ENCODE measurements at regions of chr20 and their contacts with region 1.

Region 1: DNA sequence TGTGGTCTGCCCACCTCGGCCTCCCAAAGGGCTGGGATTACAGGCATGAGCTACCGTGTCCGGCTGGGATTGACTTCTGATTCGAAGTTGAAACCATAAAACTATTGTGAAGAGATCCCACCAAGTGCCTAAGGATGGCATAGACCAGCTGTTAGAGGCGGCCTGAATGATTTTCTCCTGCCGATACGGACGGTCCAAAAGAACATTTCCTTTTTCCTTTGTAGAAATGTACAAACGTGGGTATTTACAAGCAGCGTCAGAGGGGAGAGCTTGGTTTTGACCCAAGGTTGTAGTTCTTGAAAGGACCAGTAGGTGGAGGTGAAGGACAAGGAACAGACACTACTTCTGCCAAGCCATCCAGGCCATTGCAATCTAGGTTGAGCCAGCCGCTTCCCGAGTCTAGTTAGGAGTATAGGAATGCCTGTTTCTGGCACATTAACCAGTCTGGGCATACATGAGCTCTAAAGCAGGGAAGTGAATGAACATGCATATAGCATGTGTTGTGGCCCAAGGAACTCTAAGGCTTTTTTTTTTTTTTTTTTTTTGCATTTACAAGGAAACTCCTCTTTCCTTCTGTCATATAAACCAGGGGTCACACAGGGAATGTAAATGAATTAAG is 29.1 kb downstream of the MOCS3 start:
- DNase-seq: peak; percentile 76 to 92
- ATAC-seq: peak; percentile 96
- H3K4me3 ChIP-seq: no peak overlapping the region
- H3K27ac ChIP-seq: peak overlapping the region; percentile 38 to 75; a peak in 3 of 6 replicates
- H3K4me1 ChIP-seq: peaks cover 4% of the 10 kb centered on the region; the same call in 2 of the 3 replicates
- CTCF ChIP-seq: peak; percentile 92
- EP300 ChIP-seq: no peak
- POLR2A ChIP-seq: no peak
- RAD21 ChIP-seq: peak; percentile 96 to 98

Region 2: DNA sequence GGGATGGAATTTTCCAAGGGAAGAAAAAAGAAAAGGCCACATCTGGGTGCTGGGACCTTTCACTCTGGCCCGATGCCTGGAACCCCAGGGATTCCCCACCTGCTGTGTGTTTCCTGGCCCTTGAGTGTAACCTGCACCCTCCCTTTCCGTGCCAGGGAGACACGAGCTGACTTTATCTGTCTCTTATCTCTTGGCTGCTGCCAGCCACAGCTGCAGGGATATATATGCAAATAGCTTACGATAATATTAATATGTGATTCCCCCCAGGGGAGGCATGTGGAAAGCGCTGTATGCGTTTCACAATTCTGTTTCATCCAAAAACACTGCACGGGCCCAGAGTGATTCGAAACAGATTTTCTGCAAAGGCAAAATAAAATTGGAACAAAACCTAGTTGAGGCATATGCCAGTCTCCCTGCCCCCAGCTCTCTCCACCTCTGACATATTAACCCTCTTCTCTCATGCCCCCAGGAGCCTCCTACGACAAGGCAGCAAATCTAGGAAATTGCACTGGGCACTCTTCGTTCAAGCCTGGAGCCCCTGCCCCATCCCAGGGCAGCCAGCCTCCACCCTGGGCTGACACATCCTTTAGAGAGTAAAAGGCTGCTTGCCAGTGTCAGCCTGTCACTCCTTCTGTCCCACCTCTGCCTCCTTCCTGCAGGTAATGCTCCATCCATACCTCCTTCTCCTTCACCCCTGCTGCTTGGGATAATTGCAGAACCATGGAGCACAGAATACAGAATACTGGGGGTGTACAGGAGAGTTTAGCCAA is 297.7 kb before region 1 on chr20:
- CTCF ChIA-PET with region 1: no interaction called
- POLR2A ChIA-PET with region 1: no interaction called
- DNase-seq: no peak
- ATAC-seq: peak; percentile 40 to 55; a peak in 4 of 6 replicates
- H3K4me3 ChIP-seq: no peak overlapping the region
- H3K27ac ChIP-seq: peak overlapping the region; percentile 27 to 79; a peak in 4 of 6 replicates
- H3K4me1 ChIP-seq: peaks cover 25% of the 10 kb centered on the region
- CTCF ChIP-seq: no peak
- EP300 ChIP-seq: 0 out of 5 replicates have a peak, but pooled peaks of 1 of the 2 experiments have one; percentile 38
- POLR2A ChIP-seq: no peak
- RAD21 ChIP-seq: no peak

Region 3: DNA sequence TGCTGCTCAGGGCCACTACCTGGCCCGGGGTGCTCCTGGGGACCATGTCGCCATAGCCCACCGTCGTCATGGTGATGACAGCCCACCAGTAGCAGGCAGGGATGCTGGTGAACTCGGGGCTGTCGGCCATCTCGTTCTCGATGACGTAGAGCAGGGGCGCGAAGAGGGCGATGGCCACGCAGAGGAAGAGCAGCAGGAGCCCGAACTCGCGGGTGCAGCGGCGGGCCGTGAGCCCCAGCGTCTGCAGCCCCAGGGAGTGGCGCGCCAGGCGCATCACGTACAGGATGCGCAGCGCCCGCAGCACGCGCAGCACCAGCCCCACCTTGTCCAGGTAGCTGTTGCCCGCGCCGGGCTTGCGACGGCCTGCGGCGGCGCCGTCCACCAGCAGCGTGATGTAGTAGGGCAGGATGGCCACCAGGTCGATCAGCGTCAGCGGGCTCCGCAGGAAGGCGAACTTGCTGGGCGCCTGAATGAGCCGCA is 16.6 kb after region 1 on chr20:
- CTCF ChIA-PET with region 1: interaction called, 46 read pairs
- POLR2A ChIA-PET with region 1: no interaction called
- DNase-seq: no peak
- ATAC-seq: no peak
- H3K4me3 ChIP-seq: no peak overlapping the region
- H3K27ac ChIP-seq: no peak overlapping the region
- H3K4me1 ChIP-seq: no peaks in the 10 kb centered on the region
- CTCF ChIP-seq: no peak
- EP300 ChIP-seq: no peak
- POLR2A ChIP-seq: no peak
- RAD21 ChIP-seq: no peak

Region 4: GRCh38 chr20:51311606-51312495 is 324.1 kb after region 1 on chr20:
- CTCF ChIA-PET with region 1: interaction called, 565 read pairs
- POLR2A ChIA-PET with region 1: interaction called, 5 read pairs
- DNase-seq: no peak
- ATAC-seq: no peak
- H3K4me3 ChIP-seq: no peak overlapping the region
- H3K27ac ChIP-seq: no peak overlapping the region
- H3K4me1 ChIP-seq: 0 out of 3 replicates have a peak, but pooled peaks cover 3% of the 10 kb centered on the region
- CTCF ChIP-seq: no peak
- EP300 ChIP-seq: no peak
- POLR2A ChIP-seq: no peak
- RAD21 ChIP-seq: no peak

Region 5: DNA sequence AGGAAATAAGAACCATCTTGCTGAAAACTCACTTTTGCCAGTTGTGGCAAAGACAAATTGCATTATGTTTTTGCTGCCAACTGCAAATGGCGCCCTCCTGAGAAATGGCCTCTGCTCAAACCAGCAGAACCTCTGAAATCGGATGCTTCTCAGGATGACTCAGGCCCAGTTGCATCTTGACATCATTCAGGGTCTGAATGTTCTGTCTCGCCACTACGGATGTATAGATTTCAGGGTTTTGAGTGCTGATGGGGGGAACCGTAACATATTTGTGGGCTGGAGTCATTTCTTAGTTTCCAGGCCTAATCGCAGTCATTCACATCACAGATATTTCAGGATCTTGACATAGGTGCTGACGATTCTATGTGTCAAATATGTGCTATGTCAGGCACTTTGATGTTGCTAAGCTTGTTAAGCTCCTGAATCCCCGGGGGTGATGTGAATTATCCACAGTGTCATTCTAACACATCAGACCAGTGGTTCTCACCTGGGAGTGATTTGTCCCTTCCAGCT is 347.7 kb after region 1 on chr20:
- CTCF ChIA-PET with region 1: interaction called, 16 read pairs
- POLR2A ChIA-PET with region 1: interaction called, 3 read pairs
- DNase-seq: peak; percentile 40 to 84
- ATAC-seq: peak; percentile 88 to 90
- H3K4me3 ChIP-seq: no peak overlapping the region
- H3K27ac ChIP-seq: peak overlapping the region; percentile 71 to 84
- H3K4me1 ChIP-seq: peaks cover 15% of the 10 kb centered on the region; the same call in 2 of the 3 replicates
- CTCF ChIP-seq: no peak
- EP300 ChIP-seq: peak; percentile 74 to 95; a peak in 4 of 5 replicates
- POLR2A ChIP-seq: no peak
- RAD21 ChIP-seq: no peak

Region 6: GRCh38 chr20:51372176-51372803 is 384.6 kb after region 1 on chr20:
- CTCF ChIA-PET with region 1: interaction called, 21 read pairs
- POLR2A ChIA-PET with region 1: no interaction called
- DNase-seq: peak; percentile 73 to 91
- ATAC-seq: peak; percentile 97 to 98
- H3K4me3 ChIP-seq: no peak overlapping the region
- H3K27ac ChIP-seq: peak overlapping the region; percentile 34 to 74
- H3K4me1 ChIP-seq: peaks cover 16% of the 10 kb centered on the region
- CTCF ChIP-seq: peak; percentile 88
- EP300 ChIP-seq: no peak
- POLR2A ChIP-seq: no peak
- RAD21 ChIP-seq: peak; percentile 95 to 97

Region 7: DNA sequence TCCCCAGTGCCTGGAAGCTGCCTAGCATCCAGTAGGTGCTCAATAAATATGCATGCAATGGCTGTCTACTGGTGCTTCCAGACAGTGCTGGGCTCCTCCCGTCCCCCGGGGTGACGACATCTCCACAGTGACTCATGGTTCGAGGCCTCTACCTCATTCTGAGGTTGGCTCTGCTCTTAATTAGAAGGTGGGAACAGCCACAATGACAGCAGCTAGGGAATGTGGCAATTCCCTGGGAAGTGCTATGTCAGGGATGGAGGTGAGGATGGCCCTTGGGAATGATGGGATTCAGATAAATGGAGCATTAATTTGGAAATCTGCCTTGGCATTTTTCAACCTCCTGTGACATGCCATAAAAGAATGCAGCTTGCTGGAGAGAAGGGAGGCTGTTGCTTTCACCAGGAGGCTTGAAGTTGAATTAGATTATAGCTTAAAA is 598.3 kb after region 1 on chr20:
- CTCF ChIA-PET with region 1: interaction called, 54 read pairs
- POLR2A ChIA-PET with region 1: no interaction called
- DNase-seq: peak; percentile 35 to 47
- ATAC-seq: peak; percentile 78 to 81
- H3K4me3 ChIP-seq: no peak overlapping the region
- H3K27ac ChIP-seq: peak overlapping the region in 1 of 2 experiments; percentile 45; a peak in 3 of 6 replicates
- H3K4me1 ChIP-seq: peaks cover 7% of the 10 kb centered on the region; the same call in 1 of the 3 replicates
- CTCF ChIP-seq: no peak
- EP300 ChIP-seq: no peak
- POLR2A ChIP-seq: no peak
- RAD21 ChIP-seq: no peak